SK-N-SH (cell line): ENCODE measurements at regions of chr2 and their contacts with region 1.

Region 1: GRCh38 chr2:133844214-133844892 is 276.1 kb upstream of the NCKAP5 start:
- DNase-seq: peak; percentile 78
- H3K4me3 ChIP-seq: peak overlapping the region in 1 of 2 experiments; percentile 32; a peak in 1 of 4 replicates
- H3K27ac ChIP-seq: peak overlapping the region in 1 of 2 experiments; percentile 92; a peak in 2 of 4 replicates
- H3K4me1 ChIP-seq: peaks cover 0 to 30% of the 10 kb centered on the region in 2 experiments; a peak in 3 of 4 replicates
- H3K27me3 ChIP-seq: no peaks in the 10 kb centered on the region
- CTCF ChIP-seq: peak; percentile 93
- EP300 ChIP-seq: no peak
- RAD21 ChIP-seq: peak; percentile 96

Region 2: DNA sequence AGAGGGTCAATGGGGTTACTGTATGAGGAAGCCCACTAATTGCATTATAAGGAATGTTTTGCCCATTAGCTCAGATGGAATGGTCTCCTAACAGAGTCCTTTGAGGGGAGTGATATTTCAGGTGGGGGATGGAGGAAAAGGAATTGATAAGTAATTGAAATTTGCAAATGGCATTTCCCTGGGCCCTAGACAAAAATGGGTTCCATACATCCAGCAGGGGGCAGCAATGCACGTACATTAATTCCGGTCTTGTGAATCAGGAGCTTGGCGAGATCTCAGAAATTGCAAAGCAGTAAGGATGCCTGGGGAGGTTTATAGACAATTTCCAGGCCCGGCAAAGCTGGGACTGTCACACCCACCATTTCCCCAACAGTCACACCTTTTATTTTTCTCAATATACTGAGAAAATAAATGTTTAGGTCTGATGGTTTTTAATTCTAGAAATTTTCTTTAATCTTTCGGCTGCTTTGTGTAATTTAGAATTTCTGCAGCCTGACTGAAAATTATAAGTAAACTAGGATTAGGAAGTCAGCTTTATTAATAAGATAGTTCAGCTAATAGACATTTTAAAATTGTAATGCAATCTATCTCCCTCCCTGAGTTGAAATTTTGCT is 1297.2 kb before region 1 on chr2:
- CTCF ChIA-PET with region 1: interaction called, 21 read pairs
- POLR2A ChIA-PET with region 1: no interaction called
- DNase-seq: peak; percentile 64
- H3K4me3 ChIP-seq: peak overlapping the region in 1 of 2 experiments; percentile 6; a peak in 1 of 4 replicates
- H3K27ac ChIP-seq: no peak overlapping the region
- H3K4me1 ChIP-seq: peaks cover 0 to 7% of the 10 kb centered on the region in 2 experiments; a peak in 2 of 4 replicates
- H3K27me3 ChIP-seq: no peaks in the 10 kb centered on the region
- CTCF ChIP-seq: peak; percentile 79
- EP300 ChIP-seq: no peak
- RAD21 ChIP-seq: peak; percentile 87

Region 3: DNA sequence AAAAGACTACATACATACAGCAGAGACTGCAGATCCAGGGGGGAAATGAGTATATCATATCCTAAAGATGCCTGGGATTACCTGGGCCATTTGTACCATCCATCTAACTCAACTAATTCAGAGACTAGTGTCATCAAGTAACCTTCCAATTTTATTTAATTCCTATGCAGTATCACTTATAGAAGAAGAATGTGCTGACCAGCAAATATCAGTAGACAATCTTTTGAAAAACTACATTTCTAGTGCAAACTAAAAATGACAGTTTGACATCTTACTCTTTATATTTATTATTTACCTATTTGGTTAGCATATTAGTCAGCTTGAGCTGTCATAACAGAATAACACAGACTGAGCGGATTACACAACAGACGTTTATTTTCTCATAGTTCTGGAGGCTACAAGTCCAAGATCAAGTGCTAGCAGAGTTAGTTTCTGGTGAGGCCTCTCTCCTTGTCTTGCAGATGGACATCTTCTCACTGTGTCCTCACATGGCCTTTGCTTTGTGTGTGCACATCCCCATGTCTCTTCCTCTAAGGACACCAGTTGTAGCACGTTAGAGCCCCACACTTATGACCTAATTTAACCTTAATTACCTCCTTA is 323.1 kb before region 1 on chr2:
- CTCF ChIA-PET with region 1: interaction called, 19 read pairs
- POLR2A ChIA-PET with region 1: no interaction called
- DNase-seq: no peak
- H3K4me3 ChIP-seq: no peak overlapping the region
- H3K27ac ChIP-seq: no peak overlapping the region
- H3K4me1 ChIP-seq: peaks cover 0 to 28% of the 10 kb centered on the region in 2 experiments; a peak in 1 of 4 replicates
- H3K27me3 ChIP-seq: no peaks in the 10 kb centered on the region
- CTCF ChIP-seq: no peak
- EP300 ChIP-seq: no peak
- RAD21 ChIP-seq: no peak

Region 4: DNA sequence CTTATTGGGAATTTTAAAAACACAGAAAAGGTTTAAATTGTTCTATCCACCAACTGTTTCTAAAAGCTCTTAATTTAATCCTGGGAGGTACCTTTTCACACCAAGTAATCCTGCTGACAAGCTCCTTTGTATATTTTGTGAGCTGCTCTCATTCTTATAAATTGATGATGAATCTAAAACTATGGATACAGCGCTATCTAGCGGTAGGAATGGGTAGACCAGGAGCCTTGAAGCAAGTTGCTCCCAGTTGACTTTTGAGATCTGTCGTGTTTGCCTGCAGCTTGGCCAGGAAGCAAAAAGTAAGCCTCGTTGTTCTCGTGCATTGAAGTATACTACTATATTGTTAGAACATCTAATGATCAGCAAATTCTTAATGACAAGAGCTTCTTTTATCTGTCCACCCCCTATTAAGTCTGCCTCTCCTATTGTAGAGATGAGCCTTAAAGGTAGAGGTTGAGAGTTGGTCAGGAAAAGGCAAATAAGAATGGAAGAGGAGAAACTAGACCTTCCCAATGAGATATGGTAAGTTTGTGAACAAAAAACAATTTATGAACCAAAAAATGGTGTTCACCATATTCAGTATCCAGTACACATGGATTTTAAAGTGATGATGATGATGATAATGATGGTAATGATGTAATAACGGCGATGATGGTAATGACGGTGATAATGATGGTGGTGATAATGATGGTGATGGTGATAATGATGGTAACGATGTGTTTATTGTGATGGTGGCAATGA is 64.1 kb before region 1 on chr2:
- CTCF ChIA-PET with region 1: interaction called, 15 read pairs
- POLR2A ChIA-PET with region 1: no interaction called
- DNase-seq: peak; percentile 48
- H3K4me3 ChIP-seq: no peak overlapping the region
- H3K27ac ChIP-seq: no peak overlapping the region
- H3K4me1 ChIP-seq: peaks cover 0 to 13% of the 10 kb centered on the region in 2 experiments; a peak in 2 of 4 replicates
- H3K27me3 ChIP-seq: no peaks in the 10 kb centered on the region
- CTCF ChIP-seq: peak; percentile 91
- EP300 ChIP-seq: no peak
- RAD21 ChIP-seq: peak; percentile 93

Region 5: DNA sequence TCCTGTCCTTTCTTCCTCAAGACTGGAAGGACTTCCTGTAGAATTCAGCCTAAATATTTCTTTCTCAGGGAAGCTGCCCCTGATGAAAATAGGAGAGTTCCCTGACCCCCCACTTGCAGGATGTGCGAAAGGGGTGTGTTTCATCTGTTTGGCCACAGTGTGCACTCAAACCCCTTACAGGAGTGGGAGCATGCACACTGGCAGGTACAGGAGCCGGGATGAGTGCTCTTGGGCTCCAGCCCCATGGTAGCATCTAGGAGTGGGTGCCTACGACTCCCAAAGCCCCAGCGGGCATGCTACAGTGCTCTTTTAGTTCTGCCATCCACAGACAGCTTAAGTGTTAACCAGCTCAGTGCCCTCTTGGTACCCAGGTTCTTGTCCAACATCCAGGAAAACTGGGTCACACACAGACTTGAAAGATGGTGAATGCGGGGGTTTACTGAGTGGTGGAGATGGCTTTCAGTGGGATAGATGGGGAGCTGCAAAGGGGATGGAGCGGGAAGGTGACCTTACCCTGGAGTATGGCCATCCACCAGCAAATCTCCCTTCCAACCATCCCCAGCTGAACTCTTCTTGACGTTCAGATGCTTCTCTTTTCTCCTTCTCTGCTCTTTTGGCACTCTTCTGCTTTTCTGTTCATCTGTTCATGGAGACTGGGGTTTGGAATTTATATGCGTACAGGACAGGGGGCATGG is 18.9 kb after region 1 on chr2:
- CTCF ChIA-PET with region 1: interaction called, 11 read pairs
- POLR2A ChIA-PET with region 1: no interaction called
- DNase-seq: no peak
- H3K4me3 ChIP-seq: no peak overlapping the region
- H3K27ac ChIP-seq: no peak overlapping the region
- H3K4me1 ChIP-seq: no peaks in the 10 kb centered on the region
- H3K27me3 ChIP-seq: peaks cover 9% of the 10 kb centered on the region; the same call in 1 of the 2 replicates
- CTCF ChIP-seq: no peak
- EP300 ChIP-seq: no peak
- RAD21 ChIP-seq: no peak

Region 6: DNA sequence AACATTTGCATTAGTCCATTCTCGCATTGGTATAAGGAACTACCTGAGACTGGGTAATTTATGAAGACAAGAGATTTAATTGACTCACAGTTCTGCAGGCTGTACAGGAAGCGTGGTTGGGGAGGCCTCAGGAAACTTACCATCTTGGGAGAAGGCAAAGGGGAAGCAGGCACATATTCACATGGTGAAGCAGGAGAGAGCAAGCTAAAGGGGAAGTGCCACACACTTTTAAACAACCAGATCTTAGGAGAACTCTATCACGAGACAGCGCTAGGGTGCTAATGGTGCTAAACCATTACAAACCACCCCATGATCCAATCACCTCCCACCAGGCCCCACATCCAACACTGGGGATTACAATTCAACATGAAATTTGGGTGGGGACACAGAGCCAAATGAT is 207.8 kb after region 1 on chr2:
- CTCF ChIA-PET with region 1: no interaction called
- POLR2A ChIA-PET with region 1: no interaction called
- DNase-seq: no peak
- H3K4me3 ChIP-seq: no peak overlapping the region
- H3K27ac ChIP-seq: no peak overlapping the region
- H3K4me1 ChIP-seq: no peaks in the 10 kb centered on the region
- H3K27me3 ChIP-seq: no peaks in the 10 kb centered on the region
- CTCF ChIP-seq: no peak
- EP300 ChIP-seq: no peak
- RAD21 ChIP-seq: no peak